Motor neuron (in vitro differentiated cells): ENCODE measurements at regions of chr3 and their contacts with region 1.

Region 1: DNA sequence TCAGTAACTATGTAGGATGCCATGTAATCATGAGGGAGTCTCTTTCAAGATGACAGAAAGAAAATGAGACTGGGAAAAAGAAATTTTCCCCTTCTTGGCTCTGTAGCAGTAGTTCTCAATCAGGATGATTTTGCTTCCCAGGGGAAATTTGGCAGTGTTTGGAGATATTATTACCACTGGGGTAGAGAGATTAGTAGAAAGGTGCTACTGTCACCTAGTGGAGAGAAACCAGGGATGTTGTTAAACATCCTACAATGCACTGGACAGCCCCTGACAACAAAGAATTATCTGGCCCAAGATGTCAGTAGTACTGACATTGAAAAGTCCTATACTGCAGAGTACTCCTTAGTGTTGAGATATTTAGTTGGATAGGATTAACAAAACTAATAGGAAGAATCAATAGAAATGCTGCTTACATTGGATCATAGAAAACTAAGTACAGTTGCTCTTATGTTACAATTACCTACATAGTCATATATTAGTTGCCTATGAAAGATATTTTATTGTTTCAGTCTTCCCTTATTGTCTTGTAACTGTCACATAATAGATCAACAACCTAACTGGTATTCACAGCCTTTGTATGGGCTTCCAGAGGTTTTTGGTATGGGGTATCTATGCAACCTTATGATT is 433.3 kb downstream of the RAP2B start:
- ATAC-seq: peak in 7 of 8 experiments; percentile 38 to 91 (median 68)
- H3K4me3 ChIP-seq: no peak overlapping the region
- H3K27ac ChIP-seq: no peak overlapping the region
- H3K4me1 ChIP-seq: no peaks in the 10 kb centered on the region

Region 2: GRCh38 chr3:153313302-153313965 is 281.9 kb before region 1 on chr3:
- in situ Hi-C with region 1: loop called in 1 of 9 experiments (anchors 25 kb)
- ATAC-seq: peak in 2 of 8 experiments; percentile 70 to 89
- H3K4me3 ChIP-seq: no peak overlapping the region
- H3K27ac ChIP-seq: no peak overlapping the region
- H3K4me1 ChIP-seq: no peaks in the 10 kb centered on the region